MCF 10A (cell line): ENCODE measurements at regions of chr14 and their contacts with region 1.

Region 1: DNA sequence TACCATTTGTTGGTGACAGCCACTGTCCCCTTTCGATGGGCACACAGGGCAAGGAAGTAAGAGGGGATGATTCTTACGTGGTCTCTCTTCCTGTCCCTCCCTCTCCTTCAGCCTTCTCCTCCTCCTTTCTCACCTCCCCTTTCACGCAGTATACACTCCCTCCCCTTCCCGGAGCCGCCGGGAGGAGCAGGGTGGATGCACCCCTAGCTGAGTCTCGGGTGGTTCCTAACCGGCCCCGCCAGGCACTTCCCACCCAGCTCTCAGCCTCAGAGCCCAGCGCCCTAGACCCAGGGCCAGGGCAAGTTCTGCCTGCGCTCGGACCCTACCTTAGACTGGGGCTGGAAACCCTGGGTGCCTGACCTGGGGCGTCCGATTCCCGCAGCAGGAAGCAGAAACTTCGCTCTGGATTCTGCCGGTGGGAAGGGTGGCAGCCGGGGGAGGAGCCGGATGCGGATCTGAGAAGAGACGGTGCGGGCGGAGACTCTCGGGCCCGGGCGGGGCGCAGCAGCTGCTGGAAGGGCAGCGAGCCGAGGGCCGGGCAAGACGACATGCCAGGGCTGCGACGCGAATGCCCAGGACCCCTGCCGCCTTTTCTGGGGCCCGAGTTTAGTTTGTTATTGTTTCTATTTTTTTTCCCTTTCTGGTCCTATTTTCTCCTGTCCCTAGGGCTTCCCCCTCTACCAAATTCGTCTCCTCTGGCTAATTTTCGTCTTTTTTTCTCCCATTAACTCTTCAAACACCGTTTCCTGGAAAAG is at the start of gene TEP1:
- DNase-seq: peak; percentile 87
- H3K4me3 Mint-ChIP-seq: peak within 1 kb of the TSS; percentile 77
- H3K27ac Mint-ChIP-seq: peak within 1 kb of the TSS; percentile 49
- H3K4me1 Mint-ChIP-seq: peaks cover 7% of the 10 kb centered on the region
- H3K27me3 Mint-ChIP-seq: no peaks in the 10 kb centered on the region
- CTCF ChIP-seq: no peak
- total RNA-seq, gene TEP1: 20.4 and 22.7 TPM in 2 replicates

Region 2: DNA sequence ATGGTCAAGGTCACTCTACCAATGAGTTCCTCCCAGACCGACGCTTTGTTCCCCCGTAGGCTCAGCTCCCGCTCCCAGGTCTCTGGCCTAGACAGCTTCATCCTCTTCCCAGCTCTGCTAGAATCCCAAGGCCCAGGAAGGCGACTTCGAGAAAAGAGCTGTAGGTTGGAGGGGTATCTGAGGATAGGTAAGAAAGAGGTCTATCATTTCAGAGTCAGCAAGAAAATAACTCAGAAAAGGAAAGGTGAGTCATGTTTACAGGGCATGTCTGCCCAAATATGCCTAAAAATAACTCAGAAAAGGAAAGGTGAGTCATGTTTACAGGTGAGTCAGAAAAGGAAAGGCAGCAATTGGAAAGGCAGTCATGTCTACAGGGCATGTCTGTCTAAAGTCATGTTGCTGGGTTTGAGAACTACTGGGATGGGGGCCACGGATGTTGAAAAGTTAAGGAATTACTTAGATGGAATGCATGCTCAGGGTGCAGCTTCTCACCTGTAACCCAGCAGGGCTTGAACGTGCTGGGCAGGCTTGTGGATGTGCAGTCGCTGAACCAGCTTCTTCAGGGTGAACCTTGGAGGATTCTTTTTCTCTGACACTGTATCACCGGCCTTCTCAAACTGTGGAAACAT is 12.1 kb before region 1 on chr14:
- CTCF ChIA-PET with region 1: interaction called, 8 read pairs
- POLR2A ChIA-PET with region 1: interaction called, 39 read pairs
- intact Hi-C with region 1: no loop called
- DNase-seq: peak; percentile 84
- H3K4me3 Mint-ChIP-seq: peak overlapping the region; percentile 51
- H3K27ac Mint-ChIP-seq: peak overlapping the region; percentile 94
- H3K4me1 Mint-ChIP-seq: peaks cover 14% of the 10 kb centered on the region
- H3K27me3 Mint-ChIP-seq: no peaks in the 10 kb centered on the region
- CTCF ChIP-seq: no peak

Region 3: GRCh38 chr14:20461274-20462001 is 48.2 kb after region 1 on chr14 and contains the start of gene PIP4P1:
- CTCF ChIA-PET with region 1: interaction called, 25 read pairs
- POLR2A ChIA-PET with region 1: interaction called, 77 read pairs
- intact Hi-C with region 1: no loop called
- DNase-seq: peak; percentile 100
- H3K4me3 Mint-ChIP-seq: peak within 1 kb of the TSS; percentile 76
- H3K27ac Mint-ChIP-seq: peak within 1 kb of the TSS; percentile 92
- H3K4me1 Mint-ChIP-seq: peaks cover 21% of the 10 kb centered on the region
- H3K27me3 Mint-ChIP-seq: no peaks in the 10 kb centered on the region
- CTCF ChIP-seq: no peak
- total RNA-seq, gene PIP4P1: 22.5 and 34.9 TPM in 2 replicates

Region 4: GRCh38 chr14:20820063-20820904 is 407.1 kb after region 1 on chr14:
- CTCF ChIA-PET with region 1: no interaction called
- POLR2A ChIA-PET with region 1: no interaction called
- intact Hi-C with region 1: no loop called
- DNase-seq: no peak
- H3K4me3 Mint-ChIP-seq: no peak overlapping the region
- H3K27ac Mint-ChIP-seq: no peak overlapping the region
- H3K4me1 Mint-ChIP-seq: no peaks in the 10 kb centered on the region
- H3K27me3 Mint-ChIP-seq: peaks cover 13% of the 10 kb centered on the region
- CTCF ChIP-seq: no peak